Gastrocnemius medialis (tissue), 4 donors: ENCODE measurements at regions of chr5 and their contacts with region 1.

Region 1: DNA sequence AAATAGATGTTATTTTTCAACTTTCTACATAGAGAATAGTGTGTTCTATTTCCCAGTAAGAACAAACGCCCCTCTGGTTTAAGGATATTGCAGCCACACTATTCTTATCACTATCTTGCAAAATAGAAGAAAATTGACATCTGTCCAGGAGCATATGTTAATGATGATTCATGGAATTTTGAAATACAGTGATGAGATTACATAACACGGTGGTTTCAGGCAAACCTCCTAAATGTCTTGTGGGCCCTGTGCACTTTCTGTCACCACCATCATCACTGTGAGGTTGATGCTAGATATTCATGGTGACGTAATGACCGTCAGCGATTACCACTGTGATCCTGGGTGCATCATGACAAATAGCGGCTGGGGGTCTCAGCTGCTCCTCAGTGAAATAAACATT is 48.1 kb downstream of the CFAP90 start:
- DNase-seq: peak in 1 of 2 donors; percentile 37
- ATAC-seq: peak; percentile 88 to 91
- H3K4me3 ChIP-seq: no peak overlapping the region
- H3K27ac ChIP-seq: peak overlapping the region; percentile 60 to 82 (median 70)
- H3K4me1 ChIP-seq: peaks cover 6 to 10% of the 10 kb centered on the region in 2 donors
- H3K27me3 ChIP-seq: no peaks in the 10 kb centered on the region
- CTCF ChIP-seq: no peak
- POLR2A ChIP-seq: peak in 1 of 2 donors; percentile 7

Region 2: DNA sequence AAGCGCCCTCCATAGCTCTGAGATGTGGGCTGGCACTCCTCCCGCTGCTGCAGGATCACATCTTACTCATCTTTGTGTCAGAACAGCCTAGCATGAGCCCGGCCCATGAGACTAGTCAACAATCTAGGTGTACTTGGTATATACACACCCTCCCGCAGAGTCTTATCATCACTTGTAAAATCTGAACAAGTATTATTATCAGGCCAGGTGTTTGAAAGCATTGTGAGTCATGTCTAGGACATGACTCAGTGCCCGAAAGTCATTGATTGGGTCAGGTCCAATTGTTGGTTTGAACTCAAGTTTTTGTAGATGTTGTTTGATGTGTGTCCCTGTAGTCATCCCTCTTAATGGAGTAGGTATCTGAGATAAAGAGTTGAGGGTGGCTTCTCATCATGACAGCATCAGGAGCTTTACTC is 60.6 kb before region 1 on chr5:
- in situ Hi-C with region 1: no loop called
- intact Hi-C with region 1: no loop called
- DNase-seq: no peak
- ATAC-seq: no peak
- H3K4me3 ChIP-seq: no peak overlapping the region
- H3K27ac ChIP-seq: peak overlapping the region in 1 of 4 donors; percentile 45
- H3K4me1 ChIP-seq: no peaks in the 10 kb centered on the region
- H3K27me3 ChIP-seq: no peaks in the 10 kb centered on the region
- CTCF ChIP-seq: no peak
- POLR2A ChIP-seq: no peak

Region 3: GRCh38 chr5:7754992-7755596 is 47.8 kb before region 1 on chr5:
- in situ Hi-C with region 1: no loop called
- intact Hi-C with region 1: loop called (anchors 2 kb)
- DNase-seq: peak in 1 of 2 donors; percentile 58
- ATAC-seq: peak in 1 of 2 donors; percentile 37
- H3K4me3 ChIP-seq: no peak overlapping the region
- H3K27ac ChIP-seq: peak overlapping the region; percentile 67 to 84 (median 76)
- H3K4me1 ChIP-seq: peaks cover 10 to 41% of the 10 kb centered on the region in 2 donors
- H3K27me3 ChIP-seq: no peaks in the 10 kb centered on the region
- CTCF ChIP-seq: peak; percentile 31 to 58 (median 39)
- POLR2A ChIP-seq: no peak

Region 4: DNA sequence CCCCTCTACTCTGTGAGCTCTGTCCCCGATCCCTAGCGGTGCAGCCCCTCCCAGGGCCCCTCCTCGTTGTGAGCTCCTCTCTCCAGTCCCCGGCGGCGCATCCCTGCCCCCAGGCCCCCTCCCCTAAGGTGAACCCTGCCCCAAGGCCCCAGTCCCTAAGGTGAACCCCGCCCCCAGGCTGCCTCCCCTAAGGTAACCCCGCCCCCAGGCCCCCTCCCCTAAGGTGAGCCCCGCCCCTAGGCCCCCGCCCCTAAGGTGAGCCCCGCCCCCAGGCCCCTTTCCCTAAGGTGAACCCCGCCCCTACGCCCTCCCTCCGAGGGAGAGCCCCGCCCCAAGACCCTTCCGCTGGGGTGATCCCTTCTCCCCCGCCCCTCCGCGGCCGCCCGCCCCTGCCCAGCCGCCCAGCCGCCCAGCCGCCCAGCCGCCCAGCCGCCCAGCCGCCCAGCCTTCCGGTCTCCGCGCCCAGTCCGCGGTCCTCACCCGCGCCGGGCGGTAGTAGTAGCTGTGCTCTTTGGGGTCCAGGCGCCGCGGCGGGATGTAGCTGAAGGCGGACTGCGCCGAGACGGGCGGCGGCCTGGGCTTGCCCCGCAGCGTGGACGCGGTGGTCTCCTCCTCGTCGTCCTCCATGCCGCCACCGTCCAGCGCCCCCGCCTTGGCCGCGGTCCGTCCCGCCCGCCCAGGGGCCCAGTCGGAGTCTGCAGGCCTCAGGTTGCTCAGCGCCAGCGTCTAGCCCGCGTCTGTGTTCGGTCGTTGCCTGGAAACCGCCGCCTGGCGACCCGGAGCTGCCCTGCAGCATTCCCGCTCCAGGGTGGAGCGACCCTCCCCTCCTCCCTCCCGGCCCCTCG is 47.8 kb after region 1 on chr5 and contains the start of gene CFAP90:
- in situ Hi-C with region 1: no loop called
- intact Hi-C with region 1: no loop called
- DNase-seq: no peak
- ATAC-seq: peak in 1 of 2 donors; percentile 38
- H3K4me3 ChIP-seq: peak within 1 kb of the TSS; percentile 52 to 58 (median 55)
- H3K27ac ChIP-seq: no peak within 1 kb of the TSS
- H3K4me1 ChIP-seq: peaks cover 0 to 13% of the 10 kb centered on the region in 2 donors
- H3K27me3 ChIP-seq: peaks cover 19 to 31% (median 20%) of the 10 kb centered on the region in 3 donors
- CTCF ChIP-seq: peak in 1 of 5 experiments; percentile 20
- POLR2A ChIP-seq: no peak
- total RNA-seq, gene CFAP90: not detected